Left ventricle myocardium superior (tissue), 1 donor: ENCODE measurements at regions of chr7 and their contacts with region 1.

Region 1: GRCh38 chr7:105934572-105935185 is 28.4 kb upstream of the CDHR3 start:
- DNase-seq: no peak
- ATAC-seq: peak; percentile 92

Region 2: DNA sequence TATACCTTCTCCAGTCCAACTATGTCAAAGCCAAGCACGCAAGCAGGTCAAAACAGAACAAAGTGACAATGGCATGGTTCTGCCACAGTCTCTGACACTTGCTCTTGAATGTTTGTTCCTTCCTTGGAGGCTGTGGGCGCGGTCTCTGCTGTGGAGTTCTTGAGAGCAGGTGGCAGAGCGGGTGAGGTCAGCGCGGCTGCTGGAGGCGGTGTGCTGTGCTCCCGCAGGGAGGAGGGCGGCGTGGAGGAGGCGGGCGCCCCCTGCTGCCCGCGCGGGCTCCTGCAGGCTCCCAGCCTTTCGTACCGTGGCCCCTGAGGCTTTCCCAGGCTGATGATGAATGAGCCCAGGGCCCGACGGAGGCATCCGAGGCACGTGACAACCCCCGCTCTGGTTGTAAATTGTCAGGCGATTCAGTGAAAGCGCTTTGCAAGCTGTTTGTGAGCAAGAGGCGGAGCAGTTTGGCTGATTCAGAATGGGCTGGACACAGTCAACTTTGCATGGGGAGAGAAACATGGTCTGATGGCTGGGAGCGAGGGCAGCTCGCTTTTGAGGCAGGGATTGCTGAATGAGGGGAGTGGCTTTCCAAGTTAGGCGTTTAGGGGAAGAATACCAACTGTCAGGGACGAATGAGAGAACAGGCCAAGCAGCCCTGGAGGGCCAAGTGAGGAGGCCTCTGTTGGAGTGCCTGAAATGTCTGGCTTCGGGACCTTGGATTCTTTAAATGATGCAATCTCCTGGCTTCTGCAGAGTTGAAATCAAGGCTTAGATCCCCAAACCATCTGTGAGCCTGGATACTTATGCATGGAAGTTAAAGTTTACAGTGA is 74.9 kb after region 1 on chr7:
- intact Hi-C with region 1: loop called (anchors 10 kb)
- DNase-seq: peak; percentile 87
- ATAC-seq: peak; percentile 96

Region 3: GRCh38 chr7:106031300-106032035 is 96.8 kb after region 1 on chr7:
- intact Hi-C with region 1: loop called (anchors 10 kb)
- DNase-seq: peak; percentile 30
- ATAC-seq: no peak